Left colon (tissue), 2 donors: ENCODE measurements at regions of chr1 and their contacts with region 1.

Region 1: GRCh38 chr1:2412519-2413233 is at the start of gene PEX10:
- DNase-seq: peak; percentile 97 to 99
- ATAC-seq: peak; percentile 76
- total RNA-seq, gene PEX10: 17.8 to 19.9 TPM

Region 2: GRCh38 chr1:2360588-2361364 is 51.9 kb before region 1 on chr1:
- intact Hi-C with region 1: no loop called
- DNase-seq: peak in 1 of 2 donors; percentile 3
- ATAC-seq: no peak

Region 3: DNA sequence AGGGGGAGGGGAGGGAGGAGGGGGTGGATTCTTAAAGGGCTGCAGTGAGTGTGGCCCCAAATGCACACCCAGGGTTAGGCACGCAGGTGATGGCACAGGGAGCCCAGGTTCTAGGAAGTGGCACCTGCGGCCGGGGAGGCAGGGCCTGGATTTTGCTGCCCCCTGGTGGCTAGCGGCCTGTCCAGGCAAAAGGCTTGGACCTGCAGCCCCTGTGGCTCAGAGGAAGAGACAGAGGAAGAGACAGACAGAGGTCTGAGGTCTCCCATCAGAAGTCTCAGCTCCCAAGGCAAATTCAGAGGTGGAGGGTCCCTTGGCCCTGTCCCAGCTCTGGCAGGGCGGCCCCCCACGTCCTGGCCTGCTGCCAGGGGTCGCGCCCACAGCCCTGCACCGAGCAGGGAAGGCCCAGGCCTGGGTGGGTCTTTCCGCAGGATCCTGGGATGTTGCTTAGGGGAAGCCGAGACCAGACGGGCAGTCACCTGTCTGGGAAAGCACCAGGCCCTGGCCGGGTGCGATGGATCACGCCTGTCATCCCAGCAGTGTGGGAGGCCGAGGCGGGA is 135.4 kb after region 1 on chr1:
- intact Hi-C with region 1: loop called in 1 of 2 experiments (anchors 2 kb)
- DNase-seq: peak; percentile 91 to 93
- ATAC-seq: peak; percentile 53

Region 4: DNA sequence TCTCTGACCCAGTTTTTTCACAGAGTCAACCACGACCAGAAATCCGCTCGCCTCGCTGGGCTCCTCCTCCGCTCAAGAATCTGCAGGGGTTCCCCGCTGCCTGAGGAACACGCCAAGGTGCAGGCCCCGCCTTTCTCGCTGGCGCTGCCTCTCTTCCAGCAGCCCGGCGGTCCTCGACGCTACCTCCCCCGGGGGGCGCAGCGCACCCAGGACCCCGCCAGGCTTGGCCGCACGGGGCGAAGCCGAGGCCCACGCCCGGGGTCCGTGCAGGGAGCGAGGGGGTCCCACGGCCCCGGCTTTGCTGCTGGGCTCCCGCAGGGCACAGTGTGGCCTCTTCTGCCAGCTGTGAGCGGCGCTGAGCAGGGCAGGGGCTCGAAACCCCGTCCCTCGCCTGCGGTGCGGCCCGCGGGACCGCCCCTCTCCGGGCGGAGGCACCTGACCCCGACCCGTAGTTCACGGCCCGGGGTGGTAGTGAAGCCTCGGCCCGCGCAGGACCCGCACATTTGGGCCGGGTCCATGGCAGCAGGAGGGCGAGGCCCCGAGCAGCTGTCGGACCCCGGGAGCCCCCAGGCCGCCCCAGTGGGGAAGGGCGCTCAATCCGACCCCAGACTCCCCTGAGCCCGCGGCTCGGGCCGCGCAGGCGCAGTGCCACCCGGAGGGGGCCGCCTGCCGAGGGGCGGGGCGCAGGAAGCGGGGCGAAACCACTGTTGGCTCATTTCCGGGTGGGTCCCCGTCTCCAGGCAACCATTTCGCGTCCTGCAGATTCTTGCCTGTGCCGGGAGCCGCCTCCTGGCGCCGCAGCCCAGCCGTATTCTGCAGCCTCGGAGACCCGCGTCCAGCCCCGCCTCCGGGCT is 230.1 kb after region 1 on chr1:
- intact Hi-C with region 1: loop called in 1 of 2 experiments (anchors 10 kb)
- DNase-seq: peak; percentile 92 to 93
- ATAC-seq: peak; percentile 89

Region 5: GRCh38 chr1:2784854-2785572 is 372.3 kb after region 1 on chr1:
- intact Hi-C with region 1: loop called in 1 of 2 experiments (anchors 5 kb)
- DNase-seq: peak in 1 of 2 donors; percentile 3
- ATAC-seq: no peak